ENCODE measurements at regions of chr1 and their contacts with region 1.

Region 1: DNA sequence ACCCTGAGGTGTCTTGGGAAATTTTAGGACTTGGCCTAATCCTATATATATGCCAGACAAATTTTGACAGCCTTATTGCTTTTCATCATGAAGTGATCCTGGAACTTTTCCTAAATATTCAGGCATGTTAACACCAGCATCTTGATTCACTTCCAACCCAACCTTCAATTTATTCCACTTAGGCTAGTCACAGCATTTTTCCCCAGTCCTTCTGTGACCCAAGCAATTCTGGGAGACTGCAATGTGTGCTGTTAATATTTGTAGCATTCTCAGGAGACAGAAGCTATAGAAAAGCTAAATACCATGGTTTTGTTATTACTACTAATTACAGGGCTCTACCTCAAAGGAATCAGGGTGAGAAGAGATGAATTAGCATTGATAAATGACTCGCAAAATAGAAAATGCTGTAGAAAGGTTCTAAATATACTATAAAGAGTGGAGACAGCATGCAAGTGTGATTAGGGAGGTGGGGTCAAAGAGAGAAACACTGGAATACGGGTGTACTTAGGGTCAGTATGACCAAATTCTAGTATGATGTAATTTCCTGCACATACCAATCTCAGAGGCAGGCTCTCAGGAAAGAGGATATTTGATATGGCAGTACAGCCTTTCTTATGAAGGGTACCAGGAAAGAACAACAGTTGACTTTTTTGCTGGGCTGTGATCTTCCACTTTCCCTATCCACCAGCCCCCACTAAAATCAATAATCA is 29.1 kb downstream of the PRRX1 start:
- DNase-seq: no peak
- ATAC-seq: no peak
- H3K4me3 ChIP-seq: no peak overlapping the region
- H3K27ac ChIP-seq: no peak overlapping the region
- H3K4me1 ChIP-seq: no peaks in the 10 kb centered on the region
- H3K27me3 ChIP-seq: no peaks in the 10 kb centered on the region
- CTCF ChIP-seq: no peak

Region 2: GRCh38 chr1:170765712-170766330 is 72.8 kb after region 1 on chr1:
- CTCF ChIA-PET with region 1: no interaction called
- POLR2A ChIA-PET with region 1: no interaction called
- intact Hi-C with region 1: loop called (anchors 1 kb)
- DNase-seq: peak; percentile 46
- ATAC-seq: peak; percentile 43
- H3K4me3 ChIP-seq: no peak overlapping the region
- H3K27ac ChIP-seq: no peak overlapping the region
- H3K4me1 ChIP-seq: no peaks in the 10 kb centered on the region
- H3K27me3 ChIP-seq: no peaks in the 10 kb centered on the region
- CTCF ChIP-seq: peak; percentile 70

Region 3: DNA sequence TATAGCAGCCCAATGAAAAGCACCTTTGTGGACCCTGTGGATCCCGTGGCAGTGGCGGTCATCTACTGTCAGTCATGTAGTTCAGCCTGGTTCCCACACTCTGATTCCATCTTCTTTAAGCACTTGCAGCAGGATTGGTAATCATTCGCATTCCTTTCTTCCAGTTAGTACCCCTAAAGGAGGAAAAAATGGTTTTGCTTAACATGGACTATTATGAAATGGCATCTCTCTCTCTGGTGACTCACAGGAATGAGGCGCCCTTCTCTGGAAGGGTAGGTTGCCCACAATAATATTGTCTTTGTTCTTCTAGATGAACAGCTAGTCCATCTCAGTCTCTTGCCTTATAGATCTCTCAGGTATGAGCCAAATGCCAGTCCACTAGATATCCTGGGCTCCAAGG is 114.4 kb after region 1 on chr1:
- CTCF ChIA-PET with region 1: no interaction called
- POLR2A ChIA-PET with region 1: no interaction called
- intact Hi-C with region 1: no loop called
- DNase-seq: peak; percentile 49
- ATAC-seq: no peak
- H3K4me3 ChIP-seq: no peak overlapping the region
- H3K27ac ChIP-seq: no peak overlapping the region
- H3K4me1 ChIP-seq: no peaks in the 10 kb centered on the region; the same call in 1 of the 2 replicates
- H3K27me3 ChIP-seq: no peaks in the 10 kb centered on the region
- CTCF ChIP-seq: no peak